ENCODE measurements at regions of chr1 and their contacts with region 1.

Region 1: DNA sequence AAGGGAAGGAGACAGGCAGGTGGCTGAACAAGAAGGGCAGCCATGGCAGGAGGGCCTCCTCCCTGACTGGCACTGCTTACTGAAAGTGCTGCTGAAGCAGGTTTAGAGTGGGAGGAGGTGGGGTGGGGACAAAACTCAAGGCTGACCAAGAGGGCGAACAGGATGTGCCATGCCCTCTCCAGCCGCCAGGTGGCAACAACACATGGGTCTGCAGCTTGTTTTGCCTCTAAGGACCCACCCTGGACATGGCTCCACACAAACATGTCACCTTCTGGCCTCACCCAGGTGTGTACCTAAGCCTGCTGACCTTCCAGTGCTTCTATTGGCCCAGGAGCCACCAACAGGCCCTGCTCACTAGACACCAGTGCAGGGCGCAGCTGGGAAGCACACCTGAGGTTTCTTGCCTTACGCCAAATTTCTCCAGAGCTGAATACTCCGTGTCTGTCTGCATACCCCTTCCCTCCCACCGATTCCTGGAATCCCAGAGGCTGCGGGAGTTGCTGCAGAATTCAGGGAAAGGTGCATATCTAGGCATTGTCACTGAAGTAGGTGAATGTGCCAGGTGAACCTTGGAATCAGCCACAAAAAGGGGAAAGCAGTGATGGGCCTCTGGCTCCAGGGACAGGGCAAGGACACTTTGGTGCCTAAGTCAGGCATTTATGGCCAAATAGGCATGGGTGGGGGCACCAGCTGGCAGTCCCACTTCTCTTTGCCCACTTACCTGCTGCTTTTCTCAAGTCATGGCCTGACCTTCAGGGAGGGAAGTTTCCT is 5.3 kb downstream of the PSRC1 start:
- DNase-seq: peak; percentile 60 to 75
- ATAC-seq: peak; percentile 76 to 94 (median 87)
- H3K4me3 ChIP-seq: no peak overlapping the region
- H3K4me3 Mint-ChIP-seq: no peak overlapping the region
- H3K27ac ChIP-seq: no peak overlapping the region
- H3K27ac Mint-ChIP-seq: no peak overlapping the region
- H3K4me1 ChIP-seq: peaks cover 10% of the 10 kb centered on the region
- H3K4me1 Mint-ChIP-seq: peaks cover 6 to 17% of the 10 kb centered on the region in 2 donors
- H3K27me3 ChIP-seq: no peaks in the 10 kb centered on the region
- H3K27me3 Mint-ChIP-seq: no peaks in the 10 kb centered on the region
- CTCF ChIP-seq: peak; percentile 83

Region 2: DNA sequence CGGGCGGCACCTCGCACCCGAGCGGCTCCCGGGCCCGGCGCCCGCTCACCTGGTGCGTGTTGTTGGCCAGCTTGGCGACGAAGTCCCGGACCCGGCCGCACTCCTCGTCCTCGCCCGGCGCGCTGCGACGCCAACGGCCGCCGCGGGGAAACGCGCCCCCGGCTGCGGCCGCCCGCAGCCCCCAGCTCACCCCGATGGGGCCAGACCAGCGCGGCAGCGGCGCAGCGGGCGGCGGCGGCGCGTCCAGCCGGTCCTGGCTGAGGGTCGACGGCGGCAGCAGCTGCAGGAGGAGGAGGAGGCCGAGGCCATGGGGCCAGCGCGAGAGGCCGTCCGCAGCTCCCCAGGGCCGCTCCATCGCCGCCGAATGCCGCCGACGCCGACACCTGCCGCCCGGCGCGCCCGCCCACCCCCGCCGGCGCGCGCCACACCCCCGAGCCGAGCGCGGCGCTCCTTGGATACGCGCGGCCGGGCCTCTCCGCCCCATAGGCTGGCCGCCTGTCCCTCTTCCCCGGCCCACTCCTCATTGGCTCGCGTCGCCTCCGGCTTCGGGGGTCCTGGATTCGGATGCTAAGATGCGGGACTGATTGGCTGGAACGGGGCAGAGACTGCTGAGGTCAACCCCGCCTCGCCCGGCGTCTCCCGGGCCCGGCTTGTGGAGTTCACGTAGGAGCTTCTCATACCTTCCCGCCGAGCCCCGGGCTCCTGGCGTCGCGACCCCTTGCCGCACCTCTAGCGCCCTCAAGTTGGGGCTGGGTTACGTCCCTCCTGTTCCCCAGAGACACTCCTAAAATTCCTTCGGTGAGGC is 120.1 kb after region 1 on chr1 and contains the start of gene SORT1:
- intact Hi-C with region 1: loop called (anchors 1 kb)
- DNase-seq: peak; percentile 50 to 74
- ATAC-seq: peak; percentile 92 to 98 (median 94)
- H3K4me3 ChIP-seq: peak within 1 kb of the TSS; percentile 37
- H3K4me3 Mint-ChIP-seq: peak within 1 kb of the TSS; percentile 92
- H3K27ac ChIP-seq: no peak within 1 kb of the TSS
- H3K27ac Mint-ChIP-seq: peak within 1 kb of the TSS in 1 of 2 donors; percentile 22
- H3K4me1 ChIP-seq: peaks cover 17% of the 10 kb centered on the region
- H3K4me1 Mint-ChIP-seq: peaks cover 13 to 17% of the 10 kb centered on the region in 2 donors
- H3K27me3 ChIP-seq: peaks cover 15% of the 10 kb centered on the region
- H3K27me3 Mint-ChIP-seq: peaks cover 25 to 33% of the 10 kb centered on the region in 2 donors
- CTCF ChIP-seq: no peak
- total RNA-seq, gene SORT1: 2.7 to 7.1 (median 3.7) TPM